ENCODE measurements at regions of chrX and their contacts with region 1.

Region 1: GRCh38 chrX:73562984-73563737 is at the start of gene CHIC1:
- DNase-seq: peak; percentile 33 to 80 (median 71)
- ATAC-seq: peak; percentile 80
- H3K4me3 ChIP-seq: peak within 1 kb of the TSS; percentile 73
- H3K4me3 Mint-ChIP-seq: peak within 1 kb of the TSS; percentile 91 to 99 (median 96)
- H3K27ac ChIP-seq: peak within 1 kb of the TSS; percentile 81
- H3K27ac Mint-ChIP-seq: peak within 1 kb of the TSS; percentile 96 to 100 (median 98)
- H3K4me1 ChIP-seq: no peaks in the 10 kb centered on the region
- H3K4me1 Mint-ChIP-seq: peaks cover 7 to 26% (median 13%) of the 10 kb centered on the region in 7 donors
- H3K27me3 ChIP-seq: no peaks in the 10 kb centered on the region
- H3K27me3 Mint-ChIP-seq: no peaks in the 10 kb centered on the region
- total RNA-seq, gene CHIC1: 7.8 to 17.3 (median 10.7) TPM

Region 2: DNA sequence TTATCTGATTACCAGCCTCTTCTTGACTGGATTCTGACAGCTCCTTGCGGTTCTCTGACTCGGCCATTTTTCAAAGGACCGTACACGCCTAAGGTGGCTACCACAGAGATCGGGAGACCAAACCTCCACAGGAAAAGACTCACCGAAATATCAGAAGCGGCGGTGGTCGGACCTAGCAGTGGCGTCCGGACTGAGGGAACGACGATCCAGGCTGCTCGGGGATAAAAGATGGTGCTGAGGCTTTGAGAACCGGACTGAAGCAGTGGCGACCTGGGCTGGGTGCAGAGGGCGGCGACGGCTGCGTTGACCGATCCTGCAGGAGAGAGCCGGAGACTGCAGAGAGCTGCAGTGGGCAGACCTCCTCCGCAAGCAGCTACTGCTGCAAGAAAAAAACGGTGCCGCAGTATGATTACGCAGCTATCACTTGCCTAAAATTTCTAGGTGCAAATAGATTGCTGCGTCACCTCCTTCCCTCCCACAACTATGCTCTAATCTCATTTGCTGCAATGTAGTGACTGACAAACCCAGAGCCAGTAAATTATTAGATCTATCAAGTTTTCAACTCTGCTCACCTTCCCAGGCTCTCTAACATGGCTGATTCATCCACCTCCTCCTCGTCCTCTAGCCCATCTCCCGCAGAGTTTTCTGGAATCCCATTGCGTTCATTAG is 348.6 kb before region 1 on chrX and contains the start of gene NAP1L2:
- CTCF ChIA-PET with region 1: no interaction called
- POLR2A ChIA-PET with region 1: no interaction called
- intact Hi-C with region 1: loop called in 1 of 2 experiments (anchors 2 kb)
- DNase-seq: peak; percentile 3 to 64 (median 47)
- ATAC-seq: peak; percentile 92
- H3K4me3 ChIP-seq: peak within 1 kb of the TSS; percentile 77
- H3K4me3 Mint-ChIP-seq: peak within 1 kb of the TSS; percentile 87 to 95 (median 90)
- H3K27ac ChIP-seq: peak within 1 kb of the TSS; percentile 74
- H3K27ac Mint-ChIP-seq: peak within 1 kb of the TSS; percentile 68 to 94 (median 87)
- H3K4me1 ChIP-seq: no peaks in the 10 kb centered on the region
- H3K4me1 Mint-ChIP-seq: peaks cover 5 to 26% (median 14%) of the 10 kb centered on the region in 7 donors
- H3K27me3 ChIP-seq: no peaks in the 10 kb centered on the region
- H3K27me3 Mint-ChIP-seq: peaks cover 0 to 11% (median 4%) of the 10 kb centered on the region in 5 donors
- total RNA-seq, gene NAP1L2: 2.5 to 17.4 (median 2.8) TPM

Region 3: GRCh38 chrX:73410110-73410509 is 153.1 kb before region 1 on chrX:
- CTCF ChIA-PET with region 1: no interaction called
- POLR2A ChIA-PET with region 1: no interaction called
- intact Hi-C with region 1: no loop called
- DNase-seq: no peak
- ATAC-seq: no peak
- H3K4me3 ChIP-seq: no peak overlapping the region
- H3K4me3 Mint-ChIP-seq: no peak overlapping the region
- H3K27ac ChIP-seq: no peak overlapping the region
- H3K27ac Mint-ChIP-seq: no peak overlapping the region
- H3K4me1 ChIP-seq: no peaks in the 10 kb centered on the region
- H3K4me1 Mint-ChIP-seq: no peaks in the 10 kb centered on the region
- H3K27me3 ChIP-seq: peaks cover 0 to 3% of the 10 kb centered on the region in 2 donors
- H3K27me3 Mint-ChIP-seq: peaks cover 0 to 7% (median 0%) of the 10 kb centered on the region in 5 donors

Region 4: DNA sequence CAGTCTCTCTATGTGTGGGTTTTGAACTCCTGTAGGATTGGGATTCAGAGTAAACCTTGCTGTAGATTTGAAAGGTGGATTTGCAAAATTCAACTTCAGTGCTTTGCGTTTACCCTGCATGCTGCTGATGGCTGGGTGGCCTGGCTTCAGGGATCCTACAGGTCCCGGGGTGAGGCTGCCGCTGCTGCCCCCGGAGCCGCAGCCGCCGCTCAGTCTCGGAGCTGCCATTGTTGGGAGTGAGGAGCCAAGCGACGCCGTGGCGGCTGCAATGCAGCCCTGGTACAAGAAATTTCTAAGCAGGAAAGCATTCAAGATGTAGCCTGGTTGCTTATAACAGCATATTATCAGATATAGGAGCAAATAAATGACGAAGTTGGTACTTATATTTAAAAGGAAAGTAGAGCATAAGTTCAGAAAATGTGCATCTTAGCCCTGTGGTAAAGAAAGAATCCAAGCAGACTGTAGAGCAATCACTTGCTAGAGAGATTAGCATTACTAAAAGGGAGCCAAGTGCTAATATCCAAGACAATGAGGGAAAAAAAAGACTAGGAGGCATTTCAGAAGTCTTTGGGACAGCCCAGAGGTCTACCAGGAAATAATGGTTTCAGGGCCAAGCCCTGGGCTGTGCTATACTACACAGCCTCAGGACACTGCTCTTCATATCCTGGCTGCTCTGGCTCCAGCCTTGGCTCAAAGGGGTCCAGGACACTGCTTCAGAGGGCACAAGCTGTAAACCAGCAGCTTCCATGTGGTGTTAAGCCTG is 37.1 kb before region 1 on chrX:
- CTCF ChIA-PET with region 1: no interaction called
- POLR2A ChIA-PET with region 1: no interaction called
- intact Hi-C with region 1: no loop called
- DNase-seq: no peak
- ATAC-seq: no peak
- H3K4me3 ChIP-seq: no peak overlapping the region
- H3K4me3 Mint-ChIP-seq: no peak overlapping the region
- H3K27ac ChIP-seq: no peak overlapping the region
- H3K27ac Mint-ChIP-seq: no peak overlapping the region
- H3K4me1 ChIP-seq: no peaks in the 10 kb centered on the region
- H3K4me1 Mint-ChIP-seq: no peaks in the 10 kb centered on the region
- H3K27me3 ChIP-seq: no peaks in the 10 kb centered on the region
- H3K27me3 Mint-ChIP-seq: no peaks in the 10 kb centered on the region

Region 5: GRCh38 chrX:73581002-73581628 is 18.0 kb after region 1 on chrX:
- CTCF ChIA-PET with region 1: no interaction called
- POLR2A ChIA-PET with region 1: no interaction called
- intact Hi-C with region 1: loop called in 1 of 2 experiments (anchors 2 kb)
- DNase-seq: no peak
- ATAC-seq: no peak
- H3K4me3 ChIP-seq: no peak overlapping the region
- H3K4me3 Mint-ChIP-seq: no peak overlapping the region
- H3K27ac ChIP-seq: no peak overlapping the region
- H3K27ac Mint-ChIP-seq: peak overlapping the region in 4 of 9 donors; percentile 5 to 27 (median 21)
- H3K4me1 ChIP-seq: no peaks in the 10 kb centered on the region
- H3K4me1 Mint-ChIP-seq: peaks cover 0 to 36% (median 15%) of the 10 kb centered on the region in 7 donors
- H3K27me3 ChIP-seq: no peaks in the 10 kb centered on the region
- H3K27me3 Mint-ChIP-seq: no peaks in the 10 kb centered on the region

Region 6: DNA sequence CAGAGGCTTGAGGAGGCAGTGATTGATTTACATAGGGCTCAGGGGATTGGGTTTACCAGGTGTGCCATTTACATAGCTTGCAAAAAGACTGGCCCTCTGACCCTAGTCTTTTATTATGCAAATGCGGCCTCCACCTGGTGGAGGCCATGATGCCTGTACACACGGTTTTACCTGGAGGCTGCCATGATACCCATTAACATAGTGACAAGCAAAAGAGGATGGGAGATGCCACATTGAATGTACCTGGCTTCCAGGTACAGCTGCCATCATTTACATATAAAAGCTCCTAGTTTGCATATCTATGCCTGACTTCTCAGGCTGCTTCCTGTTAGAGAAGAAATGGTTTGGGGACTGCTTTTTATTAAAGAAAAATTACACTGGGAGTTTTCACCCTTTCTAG is 1290.1 kb after region 1 on chrX:
- CTCF ChIA-PET with region 1: no interaction called
- POLR2A ChIA-PET with region 1: no interaction called
- intact Hi-C with region 1: no loop called
- DNase-seq: no peak
- ATAC-seq: no peak
- H3K4me3 ChIP-seq: no peak overlapping the region
- H3K4me3 Mint-ChIP-seq: no peak overlapping the region
- H3K27ac ChIP-seq: no peak overlapping the region
- H3K27ac Mint-ChIP-seq: no peak overlapping the region
- H3K4me1 ChIP-seq: no peaks in the 10 kb centered on the region
- H3K4me1 Mint-ChIP-seq: no peaks in the 10 kb centered on the region
- H3K27me3 ChIP-seq: no peaks in the 10 kb centered on the region
- H3K27me3 Mint-ChIP-seq: no peaks in the 10 kb centered on the region

Region 7: DNA sequence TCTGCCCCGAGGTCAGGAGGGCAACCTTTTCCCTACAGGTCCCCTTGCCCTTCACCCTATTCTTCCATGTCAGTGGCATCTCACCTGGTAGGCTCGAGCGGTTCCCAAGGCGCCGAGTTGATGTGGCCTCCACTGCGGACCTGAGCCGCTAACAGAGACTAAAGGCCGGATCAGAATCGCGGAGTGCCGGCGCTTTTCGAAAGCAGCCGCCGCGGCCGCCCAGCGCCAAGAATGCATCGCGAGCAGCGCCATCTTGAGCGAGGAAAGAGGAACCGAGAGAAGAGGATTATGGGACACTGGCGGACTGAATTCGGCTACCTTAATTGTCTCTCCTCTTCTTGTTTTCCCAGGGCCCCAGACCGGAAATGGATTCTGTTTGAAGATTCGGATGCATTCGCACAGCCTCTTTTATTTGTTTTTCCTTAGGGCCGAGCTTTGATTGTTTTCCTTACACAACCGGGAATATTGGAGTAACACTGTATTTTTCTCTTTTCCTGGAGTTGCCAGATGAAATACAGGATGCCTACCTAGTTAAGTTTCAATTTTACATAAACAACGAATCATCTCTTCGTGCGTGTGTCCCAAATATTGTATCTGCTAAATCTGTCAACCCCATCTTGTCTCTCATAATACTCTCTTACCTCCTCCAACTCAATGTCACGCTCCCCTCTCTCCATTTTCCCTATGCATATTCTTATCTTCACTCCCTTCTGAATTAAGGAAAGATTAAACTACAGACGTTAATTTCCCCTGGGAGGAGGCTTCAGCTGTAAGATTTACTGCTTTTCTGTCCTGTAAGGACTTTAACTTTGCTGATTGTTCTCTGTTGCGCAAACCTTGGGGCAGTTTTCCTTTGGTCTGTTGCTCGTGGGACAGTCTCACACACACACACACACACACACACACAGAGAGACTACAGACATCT is 1593.1 kb after region 1 on chrX and contains the start of gene ABCB7:
- CTCF ChIA-PET with region 1: no interaction called
- POLR2A ChIA-PET with region 1: no interaction called
- intact Hi-C with region 1: loop called in 1 of 2 experiments (anchors 5 kb)
- DNase-seq: peak; percentile 24 to 68 (median 59)
- ATAC-seq: peak; percentile 95
- H3K4me3 ChIP-seq: peak within 1 kb of the TSS; percentile 86
- H3K4me3 Mint-ChIP-seq: peak within 1 kb of the TSS; percentile 87 to 100 (median 95)
- H3K27ac ChIP-seq: peak within 1 kb of the TSS; percentile 75
- H3K27ac Mint-ChIP-seq: peak within 1 kb of the TSS; percentile 92 to 100 (median 96)
- H3K4me1 ChIP-seq: no peaks in the 10 kb centered on the region
- H3K4me1 Mint-ChIP-seq: peaks cover 10 to 63% (median 41%) of the 10 kb centered on the region in 7 donors
- H3K27me3 ChIP-seq: no peaks in the 10 kb centered on the region
- H3K27me3 Mint-ChIP-seq: no peaks in the 10 kb centered on the region
- total RNA-seq, gene ABCB7: 19.4 to 33.0 (median 26.3) TPM